ENCODE measurements at regions of chr11 and their contacts with region 1.

Region 1: DNA sequence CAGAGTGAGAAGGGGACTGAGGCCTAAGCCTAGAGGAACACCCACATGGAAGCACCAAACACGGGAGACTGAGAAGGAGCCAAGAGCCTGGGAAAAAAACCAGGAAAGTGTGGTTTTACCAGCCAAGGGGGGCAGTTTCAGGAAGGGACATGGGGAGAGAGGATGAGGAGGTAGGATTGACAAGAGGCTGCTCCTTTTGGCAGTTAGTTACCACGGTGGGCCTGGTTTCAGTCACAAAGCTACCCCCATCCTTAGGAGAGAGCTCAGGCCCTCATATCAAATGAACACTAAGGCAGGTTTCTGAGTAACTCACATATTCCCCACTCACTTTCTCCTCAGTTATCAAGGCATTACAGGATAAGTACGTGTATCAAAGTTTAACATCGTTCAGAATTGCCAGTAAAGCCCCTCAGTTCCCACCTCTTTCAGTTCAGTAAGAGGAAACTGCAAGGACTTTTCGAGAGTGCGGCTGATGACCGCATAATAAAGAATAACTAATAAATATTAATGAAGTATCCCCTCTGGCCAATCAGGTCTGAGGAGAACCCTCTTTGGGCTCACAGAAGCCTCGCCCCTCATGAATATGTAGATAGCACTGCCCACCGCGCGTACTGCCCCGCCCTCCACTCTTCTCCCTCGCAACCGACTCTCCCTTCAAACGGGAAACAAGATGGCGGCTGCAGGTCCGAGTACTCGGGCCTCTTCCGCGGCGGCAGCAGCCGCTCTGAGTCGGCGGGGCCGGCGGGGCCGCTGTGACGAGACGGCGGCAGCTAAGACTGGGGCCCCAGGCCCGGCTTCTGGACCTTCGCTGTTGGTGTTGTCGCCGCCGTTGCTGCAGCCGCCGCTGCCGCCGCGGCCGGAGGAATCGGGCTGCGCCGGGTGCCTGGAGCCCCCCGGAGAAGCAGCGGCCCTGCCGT is at the start of gene RNF169:
- DNase-seq: peak; percentile 97
- ATAC-seq: peak; percentile 100
- H3K4me3 ChIP-seq: peak within 1 kb of the TSS; percentile 91 to 94
- H3K27ac ChIP-seq: peak within 1 kb of the TSS; percentile 76 to 83
- H3K4me1 ChIP-seq: no peaks in the 10 kb centered on the region
- H3K27me3 ChIP-seq: no peaks in the 10 kb centered on the region
- total RNA-seq, gene RNF169: 19.8 to 23.6 TPM

Region 2: DNA sequence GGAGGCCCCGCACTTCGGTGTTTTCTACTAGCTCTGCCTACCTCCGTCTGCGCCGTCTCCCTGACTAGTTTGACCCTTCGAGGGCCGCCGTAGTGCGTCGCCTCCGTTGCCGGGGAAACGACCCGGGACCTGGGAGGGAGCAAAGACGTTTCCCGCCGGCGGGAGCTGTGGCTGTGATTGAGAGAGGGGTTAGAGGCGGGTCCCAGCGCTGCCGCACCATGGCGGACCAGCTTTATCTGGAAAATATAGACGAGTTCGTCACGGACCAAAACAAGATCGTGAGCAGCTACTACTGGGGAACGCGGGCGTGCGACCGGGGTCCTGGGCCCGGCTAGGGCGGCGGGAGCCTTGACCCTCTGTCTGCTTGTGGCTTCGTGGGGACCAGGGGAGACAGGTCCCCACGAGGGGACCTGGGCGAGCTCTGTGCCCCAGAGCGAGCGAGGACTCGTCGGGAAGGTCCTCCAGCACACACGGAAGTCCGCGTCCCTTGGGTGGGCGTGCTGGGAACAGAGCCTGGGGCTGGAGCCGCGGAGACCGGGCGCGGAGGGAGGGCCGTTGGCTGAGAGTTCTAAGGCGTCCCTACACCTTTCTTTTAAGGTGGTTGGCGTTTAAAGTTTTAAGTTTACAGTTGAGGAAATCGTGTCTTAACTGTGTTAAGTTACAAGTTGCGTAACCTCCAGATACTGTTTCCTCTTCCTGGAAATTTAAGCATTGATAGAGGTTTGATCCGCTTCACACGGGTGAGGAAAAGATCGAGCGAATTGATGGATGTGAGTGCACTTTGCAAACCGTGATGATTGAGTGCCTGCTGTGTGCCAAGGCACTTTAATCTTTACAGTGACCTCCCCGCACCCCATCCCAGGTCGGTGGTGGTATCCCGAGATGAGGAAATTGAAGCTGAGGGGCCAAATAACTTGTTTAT is 155.8 kb before region 1 on chr11 and contains the start of gene POLD3:
- intact Hi-C with region 1: loop called in 1 of 2 experiments (anchors 5 kb)
- DNase-seq: peak; percentile 96 to 99
- ATAC-seq: peak; percentile 99
- H3K4me3 ChIP-seq: peak within 1 kb of the TSS; percentile 80 to 87
- H3K27ac ChIP-seq: peak within 1 kb of the TSS in 1 of 2 donors; percentile 50
- H3K4me1 ChIP-seq: peaks cover 0 to 4% of the 10 kb centered on the region in 2 donors
- H3K27me3 ChIP-seq: no peaks in the 10 kb centered on the region
- total RNA-seq, gene POLD3: 12.4 to 19.0 TPM

Region 3: GRCh38 chr11:74720596-74721478 is 27.6 kb before region 1 on chr11:
- intact Hi-C with region 1: no loop called
- DNase-seq: peak in 1 of 2 donors; percentile 82
- ATAC-seq: peak; percentile 72
- H3K4me3 ChIP-seq: no peak overlapping the region
- H3K27ac ChIP-seq: peak overlapping the region in 1 of 2 donors; percentile 14
- H3K4me1 ChIP-seq: peaks cover 0 to 7% of the 10 kb centered on the region in 2 donors
- H3K27me3 ChIP-seq: no peaks in the 10 kb centered on the region

Region 4: GRCh38 chr11:74791333-74792100 is 43.0 kb after region 1 on chr11:
- intact Hi-C with region 1: no loop called
- DNase-seq: no peak
- ATAC-seq: peak; percentile 22
- H3K4me3 ChIP-seq: no peak overlapping the region
- H3K27ac ChIP-seq: no peak overlapping the region
- H3K4me1 ChIP-seq: no peaks in the 10 kb centered on the region
- H3K27me3 ChIP-seq: no peaks in the 10 kb centered on the region

Region 5: GRCh38 chr11:74853223-74853622 is 104.8 kb after region 1 on chr11:
- intact Hi-C with region 1: no loop called
- DNase-seq: no peak
- ATAC-seq: no peak
- H3K4me3 ChIP-seq: no peak overlapping the region
- H3K27ac ChIP-seq: no peak overlapping the region
- H3K4me1 ChIP-seq: no peaks in the 10 kb centered on the region
- H3K27me3 ChIP-seq: no peaks in the 10 kb centered on the region

Region 6: GRCh38 chr11:74895340-74896116 is 147.1 kb after region 1 on chr11:
- intact Hi-C with region 1: no loop called
- DNase-seq: no peak
- ATAC-seq: no peak
- H3K4me3 ChIP-seq: no peak overlapping the region
- H3K27ac ChIP-seq: no peak overlapping the region
- H3K4me1 ChIP-seq: no peaks in the 10 kb centered on the region
- H3K27me3 ChIP-seq: no peaks in the 10 kb centered on the region

Measured in aorta (tissue), 5 donors.